A549 (cell line): ENCODE measurements at regions of chr17 and their contacts with region 1.

Region 1: GRCh38 chr17:63984651-63985386 is 12.1 kb upstream of the SCN4A start:
- DNase-seq: peak in 1 of 2 experiments; percentile 41
- ATAC-seq: no peak
- H3K4me3 ChIP-seq: no peak overlapping the region
- H3K27ac ChIP-seq: no peak overlapping the region
- H3K4me1 ChIP-seq: peaks cover 6% of the 10 kb centered on the region; the same call in 1 of the 3 replicates
- CTCF ChIP-seq: no peak
- EP300 ChIP-seq: no peak
- POLR2A ChIP-seq: no peak
- RAD21 ChIP-seq: no peak

Region 2: DNA sequence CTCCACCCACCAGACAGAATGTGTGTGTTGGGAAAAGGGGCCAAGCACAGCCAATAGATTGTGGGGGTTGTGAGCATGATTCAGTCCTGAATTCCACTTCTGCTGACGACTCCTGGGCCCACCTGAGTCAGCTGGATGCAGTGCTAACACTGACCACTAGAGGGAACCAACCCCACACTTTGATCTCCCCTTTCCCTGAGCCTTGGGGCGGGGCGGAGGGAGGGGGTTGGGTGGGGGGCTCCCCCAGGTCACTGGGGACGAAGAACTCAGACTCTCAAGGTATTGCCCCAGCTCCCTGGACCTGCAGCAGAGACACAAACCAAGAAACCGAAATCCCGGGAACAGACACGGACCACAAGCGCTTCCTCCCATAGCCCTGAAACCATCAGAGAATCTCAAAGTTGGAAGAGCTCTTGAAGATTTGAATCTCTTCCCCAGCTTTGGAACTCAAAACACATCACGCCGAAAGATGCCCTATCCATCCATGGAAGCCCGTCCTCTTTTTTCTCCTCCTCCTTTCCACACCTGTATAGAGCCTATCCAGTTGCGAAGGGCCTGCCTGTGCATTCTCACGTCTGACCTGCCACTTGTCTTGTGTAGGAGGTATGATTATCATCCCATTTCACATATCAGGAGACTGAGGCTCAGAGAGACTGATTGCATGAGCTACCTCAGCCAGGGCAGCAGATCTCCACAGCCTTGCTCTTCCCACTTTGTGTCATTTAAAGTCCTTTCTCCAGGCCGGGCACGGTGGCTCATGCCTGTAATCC is 73.0 kb before region 1 on chr17:
- CTCF ChIA-PET with region 1: interaction called, 20 read pairs
- POLR2A ChIA-PET with region 1: no interaction called
- DNase-seq: peak; percentile 41 to 63
- ATAC-seq: peak; percentile 63 to 84; a peak in 3 of 6 replicates
- H3K4me3 ChIP-seq: no peak overlapping the region
- H3K27ac ChIP-seq: no peak overlapping the region
- H3K4me1 ChIP-seq: no peaks in the 10 kb centered on the region
- CTCF ChIP-seq: peak; percentile 90
- EP300 ChIP-seq: no peak
- POLR2A ChIP-seq: no peak
- RAD21 ChIP-seq: peak; percentile 59 to 80

Region 3: GRCh38 chr17:63931099-63931561 is 53.7 kb before region 1 on chr17:
- CTCF ChIA-PET with region 1: interaction called, 18 read pairs
- POLR2A ChIA-PET with region 1: no interaction called
- DNase-seq: no peak
- ATAC-seq: peak in 1 of 2 experiments; percentile 41; a peak in 3 of 6 replicates
- H3K4me3 ChIP-seq: no peak overlapping the region
- H3K27ac ChIP-seq: no peak overlapping the region
- H3K4me1 ChIP-seq: no peaks in the 10 kb centered on the region
- CTCF ChIP-seq: no peak
- EP300 ChIP-seq: no peak
- POLR2A ChIP-seq: no peak
- RAD21 ChIP-seq: no peak

Region 4: DNA sequence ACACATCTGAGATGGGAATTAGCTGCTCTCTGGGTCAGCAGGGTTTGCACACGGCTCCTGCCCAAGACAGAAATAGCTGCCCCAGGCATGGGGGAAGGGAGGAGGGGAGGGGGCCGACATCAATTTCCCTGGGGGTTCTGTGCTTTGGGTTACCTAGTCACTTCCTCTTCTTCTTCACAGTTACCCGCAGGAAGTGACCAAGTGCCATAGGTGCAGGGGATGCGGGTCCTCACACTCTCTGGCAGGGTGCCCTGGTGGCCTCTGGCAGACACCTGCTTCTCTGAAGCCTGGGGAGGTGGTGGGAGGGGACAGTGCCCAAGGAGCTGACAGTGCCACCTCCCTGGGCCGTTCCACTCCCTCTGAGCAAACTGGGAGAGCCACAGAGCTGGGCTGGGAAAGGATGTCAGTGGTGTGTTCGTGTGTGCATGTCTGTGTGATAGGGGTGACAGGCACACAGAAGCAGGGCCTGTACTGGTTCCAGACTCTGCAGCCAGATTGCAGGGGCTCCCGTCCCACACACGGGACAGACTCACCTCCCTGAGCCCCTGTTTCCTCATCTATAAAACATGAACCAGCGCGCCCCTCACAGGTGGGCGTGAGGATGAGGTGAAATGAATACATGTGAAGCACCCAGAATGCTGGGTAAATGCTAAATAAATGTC is 30.3 kb before region 1 on chr17:
- CTCF ChIA-PET with region 1: interaction called, 34 read pairs
- POLR2A ChIA-PET with region 1: no interaction called
- DNase-seq: no peak
- ATAC-seq: peak; percentile 6 to 26; a peak in 1 of 6 replicates
- H3K4me3 ChIP-seq: no peak overlapping the region
- H3K27ac ChIP-seq: no peak overlapping the region
- H3K4me1 ChIP-seq: no peaks in the 10 kb centered on the region
- CTCF ChIP-seq: no peak
- EP300 ChIP-seq: no peak
- POLR2A ChIP-seq: no peak
- RAD21 ChIP-seq: no peak

Region 5: DNA sequence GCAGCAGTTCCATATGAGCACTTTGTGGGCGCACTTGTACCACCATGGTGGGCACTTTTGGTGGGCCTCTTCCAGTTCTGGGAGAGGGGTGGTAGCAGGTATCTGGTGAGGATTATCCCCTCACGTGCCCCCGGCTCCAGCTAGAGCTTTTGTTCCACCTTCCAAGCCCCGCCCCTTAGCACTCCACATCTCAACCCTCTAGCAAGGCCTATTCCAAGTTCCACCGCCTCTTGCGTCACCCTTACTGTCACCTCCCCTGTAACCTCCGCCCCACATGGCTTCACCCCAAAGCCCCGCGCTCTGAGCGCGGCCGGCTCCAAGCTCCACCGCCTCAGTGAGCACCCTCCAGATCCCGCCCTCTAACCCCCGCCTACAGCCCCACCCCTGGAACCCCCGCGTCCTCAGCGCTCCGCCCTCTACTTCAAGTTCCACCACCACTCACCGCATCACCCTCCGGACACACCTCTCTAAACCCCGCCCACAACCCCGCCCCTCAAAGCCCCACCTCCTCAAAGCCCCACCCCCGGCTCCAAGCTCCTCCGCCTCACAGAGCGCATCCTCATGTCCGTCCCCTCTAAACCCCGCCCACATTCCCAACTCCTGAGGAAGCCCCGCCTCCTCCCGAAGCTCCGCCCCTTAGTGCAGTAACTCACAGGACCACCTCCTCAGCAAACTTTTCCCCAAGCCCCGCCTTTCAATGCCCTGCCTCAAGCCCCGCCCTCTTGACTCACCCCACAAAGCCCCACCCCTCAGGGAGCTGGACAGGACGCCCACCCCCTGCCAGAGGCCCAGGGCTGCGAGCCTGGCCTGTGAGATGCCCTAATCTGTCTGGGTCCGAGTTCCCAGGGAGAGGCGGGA is 23.2 kb before region 1 on chr17:
- CTCF ChIA-PET with region 1: interaction called, 23 read pairs
- POLR2A ChIA-PET with region 1: no interaction called
- DNase-seq: peak; percentile 83 to 90
- ATAC-seq: peak; percentile 60 to 85
- H3K4me3 ChIP-seq: peak overlapping the region; percentile 43
- H3K27ac ChIP-seq: peak overlapping the region; percentile 23 to 66; a peak in 5 of 6 replicates
- H3K4me1 ChIP-seq: peaks cover 10% of the 10 kb centered on the region; the same call in 2 of the 3 replicates
- CTCF ChIP-seq: no peak
- EP300 ChIP-seq: no peak
- POLR2A ChIP-seq: no peak
- RAD21 ChIP-seq: no peak

Region 6: DNA sequence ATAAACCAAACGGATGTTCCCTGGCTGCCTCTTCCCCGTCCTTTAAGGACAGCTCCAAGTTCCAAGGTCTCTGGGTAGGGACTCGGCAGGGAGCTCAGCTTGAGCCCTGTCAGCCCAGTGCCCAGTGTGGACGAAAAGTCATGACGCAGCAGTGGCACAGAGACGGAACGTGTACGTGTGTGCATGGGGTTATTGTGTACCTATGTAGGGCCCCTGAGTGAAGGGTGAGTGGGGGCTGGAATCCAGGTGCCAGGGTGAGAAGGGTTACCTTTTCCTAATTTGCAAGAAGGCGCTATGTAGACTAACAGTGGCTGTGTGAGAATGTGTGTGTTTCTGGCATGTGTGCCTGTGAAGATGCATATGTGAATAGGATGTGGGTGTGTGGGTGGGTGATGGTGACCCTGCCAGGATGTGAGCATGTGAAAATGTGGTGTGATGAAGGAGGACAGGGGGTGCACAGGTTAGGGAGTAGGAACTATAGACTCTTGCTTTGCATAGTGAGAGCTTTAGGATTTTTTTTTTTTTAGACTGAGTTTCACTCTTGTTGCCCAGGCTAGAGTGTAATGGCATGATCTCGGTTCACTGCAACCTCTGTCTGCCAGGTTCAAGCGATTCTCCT is 18.1 kb before region 1 on chr17:
- CTCF ChIA-PET with region 1: interaction called, 18 read pairs
- POLR2A ChIA-PET with region 1: no interaction called
- DNase-seq: no peak
- ATAC-seq: 0 out of 6 replicates have a peak, but pooled peaks of 1 of the 2 experiments have one; percentile 25
- H3K4me3 ChIP-seq: no peak overlapping the region
- H3K27ac ChIP-seq: no peak overlapping the region
- H3K4me1 ChIP-seq: 0 out of 3 replicates have a peak, but pooled peaks cover 2% of the 10 kb centered on the region
- CTCF ChIP-seq: no peak
- EP300 ChIP-seq: no peak
- POLR2A ChIP-seq: no peak
- RAD21 ChIP-seq: no peak

Region 7: GRCh38 chr17:63974594-63975192 is 10.1 kb before region 1 on chr17:
- CTCF ChIA-PET with region 1: interaction called, 94 read pairs
- POLR2A ChIA-PET with region 1: no interaction called
- DNase-seq: peak in 1 of 2 experiments; percentile 63
- ATAC-seq: peak; percentile 61 to 74
- H3K4me3 ChIP-seq: no peak overlapping the region
- H3K27ac ChIP-seq: peak overlapping the region; percentile 49 to 68; a peak in 5 of 6 replicates
- H3K4me1 ChIP-seq: peaks cover 19% of the 10 kb centered on the region
- CTCF ChIP-seq: no peak
- EP300 ChIP-seq: no peak
- POLR2A ChIP-seq: no peak
- RAD21 ChIP-seq: no peak